WTC11 (cell line): ENCODE measurements at regions of chr3 and their contacts with region 1.

Region 1: GRCh38 chr3:43448098-43448497 is 161.8 kb downstream of the SNRK start:
- DNase-seq: no peak
- ATAC-seq: no peak
- H3K4me3 Mint-ChIP-seq: no peak overlapping the region
- H3K27ac Mint-ChIP-seq: no peak overlapping the region
- H3K4me1 Mint-ChIP-seq: peaks cover 4% of the 10 kb centered on the region; the same call in 1 of the 2 replicates
- H3K27me3 Mint-ChIP-seq: no peaks in the 10 kb centered on the region
- CTCF ChIP-seq: no peak

Region 2: GRCh38 chr3:43296565-43296964 is 151.5 kb before region 1 on chr3:
- CTCF ChIA-PET with region 1: no interaction called
- POLR2A ChIA-PET with region 1: interaction called, 10 read pairs
- DNase-seq: no peak
- ATAC-seq: no peak
- H3K4me3 Mint-ChIP-seq: no peak overlapping the region
- H3K27ac Mint-ChIP-seq: no peak overlapping the region
- H3K4me1 Mint-ChIP-seq: peaks cover 16% of the 10 kb centered on the region
- H3K27me3 Mint-ChIP-seq: no peaks in the 10 kb centered on the region
- CTCF ChIP-seq: no peak

Region 3: DNA sequence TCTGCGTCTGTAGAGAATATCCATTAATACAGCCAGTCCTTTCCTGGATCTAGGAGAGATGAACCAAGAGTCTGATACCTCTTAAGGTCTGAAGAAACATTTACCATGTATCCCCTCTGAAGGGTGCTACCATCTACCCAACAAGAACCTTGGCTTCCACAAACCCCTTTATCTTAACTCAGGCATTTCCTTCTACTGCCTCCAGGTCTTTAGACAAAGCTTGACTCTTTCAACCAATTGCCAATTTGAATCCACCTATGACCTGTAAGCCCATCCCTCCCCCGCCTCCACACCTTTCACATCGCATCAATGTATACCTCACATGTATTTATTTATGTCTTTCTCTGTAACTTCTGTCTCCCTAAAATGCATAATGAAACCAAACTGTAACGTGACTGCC is 22.3 kb before region 1 on chr3:
- CTCF ChIA-PET with region 1: no interaction called
- POLR2A ChIA-PET with region 1: no interaction called
- DNase-seq: no peak
- ATAC-seq: peak; percentile 59
- H3K4me3 Mint-ChIP-seq: no peak overlapping the region
- H3K27ac Mint-ChIP-seq: no peak overlapping the region
- H3K4me1 Mint-ChIP-seq: peaks cover 24% of the 10 kb centered on the region
- H3K27me3 Mint-ChIP-seq: no peaks in the 10 kb centered on the region
- CTCF ChIP-seq: no peak